ENCODE measurements at regions of chr9 and their contacts with region 1.

Region 1: GRCh38 chr9:121698627-121699570 is 47.5 kb downstream of the DAB2IP start:
- DNase-seq: peak; percentile 45
- H3K4me3 ChIP-seq: peak overlapping the region; percentile 59 to 62 (median 60)
- H3K27ac ChIP-seq: peak overlapping the region; percentile 84
- H3K4me1 ChIP-seq: peaks cover 13% of the 10 kb centered on the region
- H3K27me3 ChIP-seq: no peaks in the 10 kb centered on the region
- CTCF ChIP-seq: no peak
- POLR2A ChIP-seq: no peak

Region 2: GRCh38 chr9:121621113-121621449 is 77.8 kb before region 1 on chr9:
- CTCF ChIA-PET with region 1: interaction called, 25 read pairs
- POLR2A ChIA-PET with region 1: no interaction called
- dilution Hi-C with region 1: no loop called
- intact Hi-C with region 1: no loop called
- DNase-seq: peak; percentile 35
- H3K4me3 ChIP-seq: no peak overlapping the region
- H3K27ac ChIP-seq: no peak overlapping the region
- H3K4me1 ChIP-seq: no peaks in the 10 kb centered on the region
- H3K27me3 ChIP-seq: no peaks in the 10 kb centered on the region
- CTCF ChIP-seq: peak; percentile 38 to 61
- POLR2A ChIP-seq: no peak

Region 3: DNA sequence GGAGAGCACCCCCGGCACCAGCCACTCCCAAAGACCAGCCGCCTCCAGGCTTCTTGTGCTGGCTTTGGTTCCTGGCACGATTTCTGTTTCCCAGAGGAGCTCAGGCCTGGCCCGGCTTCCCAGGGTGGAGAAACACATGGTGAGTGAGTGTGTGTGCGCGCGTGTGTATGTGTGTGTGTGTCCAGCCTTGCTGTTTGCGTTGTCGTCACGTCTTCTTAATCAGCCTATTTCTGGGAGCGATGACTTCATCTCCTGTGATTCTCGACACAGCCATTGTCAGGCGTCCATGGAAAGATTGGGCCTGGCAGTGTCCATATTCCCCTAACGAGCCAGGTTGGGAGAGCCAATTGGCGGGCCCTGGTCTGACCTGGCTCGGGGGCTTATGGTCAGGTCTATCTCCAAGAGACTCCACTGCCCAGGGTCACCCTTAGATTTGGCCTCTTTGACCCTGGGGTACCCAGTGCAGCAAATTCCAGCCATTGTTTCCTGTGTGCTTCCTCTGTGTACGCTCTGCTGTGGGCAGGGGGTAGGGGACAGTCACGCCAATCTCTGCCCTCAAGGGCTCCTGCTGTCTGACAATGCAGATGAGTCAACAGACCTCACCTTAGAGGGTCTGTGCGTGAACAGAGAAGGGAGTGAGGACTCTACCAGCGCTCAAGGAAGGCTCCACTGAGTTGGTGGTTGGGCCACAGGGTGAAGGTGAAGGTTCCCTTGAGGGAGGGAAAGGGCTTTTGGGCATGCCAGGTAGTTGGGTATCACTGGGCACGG is 26.3 kb after region 1 on chr9:
- CTCF ChIA-PET with region 1: interaction called, 6 read pairs
- POLR2A ChIA-PET with region 1: no interaction called
- dilution Hi-C with region 1: no loop called
- intact Hi-C with region 1: loop called (anchors 1 kb)
- DNase-seq: peak; percentile 97
- H3K4me3 ChIP-seq: no peak overlapping the region
- H3K27ac ChIP-seq: peak overlapping the region; percentile 71
- H3K4me1 ChIP-seq: peaks cover 23% of the 10 kb centered on the region
- H3K27me3 ChIP-seq: no peaks in the 10 kb centered on the region
- CTCF ChIP-seq: no peak
- POLR2A ChIP-seq: no peak

Region 4: DNA sequence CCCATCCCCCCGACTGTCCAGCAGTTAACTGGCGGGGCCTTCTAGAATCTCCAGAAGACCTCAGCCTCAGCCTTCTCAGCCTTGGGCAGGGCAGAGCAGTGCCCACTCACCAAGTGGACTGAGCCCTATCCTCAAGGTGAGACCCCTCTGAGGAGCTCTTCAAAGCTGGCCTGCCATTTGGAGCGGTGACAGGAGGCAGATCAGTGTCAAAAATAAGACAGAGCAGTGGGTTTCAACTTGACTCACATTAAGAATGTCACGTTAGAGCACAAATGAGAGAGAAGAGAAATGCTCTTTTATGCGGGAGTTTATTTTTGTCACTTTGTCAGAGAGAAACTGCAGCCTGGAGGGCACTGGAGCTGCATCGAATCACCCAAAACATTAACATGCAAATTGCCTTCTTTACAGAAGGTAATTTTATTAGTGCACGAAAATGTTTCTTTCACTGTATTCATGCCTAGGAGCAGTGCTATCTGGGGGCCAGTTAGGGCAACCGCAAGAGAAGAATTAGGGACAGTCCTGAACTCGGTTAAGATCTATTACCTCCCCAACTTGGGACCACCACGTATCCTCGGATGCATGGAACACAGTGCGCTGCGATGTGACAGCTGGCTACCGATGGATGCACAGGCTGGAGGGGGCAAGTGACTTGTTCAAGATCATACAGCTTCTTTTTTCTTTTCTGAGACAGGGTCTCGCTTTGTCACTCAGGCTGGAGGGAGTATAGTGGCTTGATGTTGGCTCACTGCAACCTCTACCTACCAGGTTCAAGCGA is 141.0 kb after region 1 on chr9:
- CTCF ChIA-PET with region 1: interaction called, 5 read pairs
- POLR2A ChIA-PET with region 1: no interaction called
- dilution Hi-C with region 1: no loop called
- intact Hi-C with region 1: loop called (anchors 5 kb)
- DNase-seq: no peak
- H3K4me3 ChIP-seq: no peak overlapping the region
- H3K27ac ChIP-seq: no peak overlapping the region
- H3K4me1 ChIP-seq: peaks cover 15% of the 10 kb centered on the region
- H3K27me3 ChIP-seq: no peaks in the 10 kb centered on the region
- CTCF ChIP-seq: no peak
- POLR2A ChIP-seq: no peak

Region 5: GRCh38 chr9:121992571-121993212 is 293.8 kb after region 1 on chr9:
- CTCF ChIA-PET with region 1: interaction called, 11 read pairs
- POLR2A ChIA-PET with region 1: no interaction called
- dilution Hi-C with region 1: no loop called
- intact Hi-C with region 1: loop called (anchors 1 kb)
- DNase-seq: peak; percentile 74
- H3K4me3 ChIP-seq: no peak overlapping the region
- H3K27ac ChIP-seq: no peak overlapping the region
- H3K4me1 ChIP-seq: peaks cover 5% of the 10 kb centered on the region
- H3K27me3 ChIP-seq: no peaks in the 10 kb centered on the region
- CTCF ChIP-seq: peak; percentile 58 to 68
- POLR2A ChIP-seq: no peak

Measured in endothelial cell of umbilical vein (primary cell).